Activated CD4-positive, alpha-beta memory T cell treated with anti-CD3 and anti-CD28 coated beads, Interleukin-2, amount 10 ng/mL, durations not matched to agents 7 days and 5 days (primary cell): ENCODE measurements at regions of chr5 and their contacts with region 1.

Region 1: GRCh38 chr5:77015938-77016569 is 14.2 kb upstream of the AGGF1 start:
- DNase-seq: no peak
- H3K4me3 Mint-ChIP-seq: no peak overlapping the region
- H3K27ac Mint-ChIP-seq: no peak overlapping the region
- H3K4me1 Mint-ChIP-seq: peaks cover 14% of the 10 kb centered on the region
- H3K27me3 Mint-ChIP-seq: peaks cover 18% of the 10 kb centered on the region

Region 2: DNA sequence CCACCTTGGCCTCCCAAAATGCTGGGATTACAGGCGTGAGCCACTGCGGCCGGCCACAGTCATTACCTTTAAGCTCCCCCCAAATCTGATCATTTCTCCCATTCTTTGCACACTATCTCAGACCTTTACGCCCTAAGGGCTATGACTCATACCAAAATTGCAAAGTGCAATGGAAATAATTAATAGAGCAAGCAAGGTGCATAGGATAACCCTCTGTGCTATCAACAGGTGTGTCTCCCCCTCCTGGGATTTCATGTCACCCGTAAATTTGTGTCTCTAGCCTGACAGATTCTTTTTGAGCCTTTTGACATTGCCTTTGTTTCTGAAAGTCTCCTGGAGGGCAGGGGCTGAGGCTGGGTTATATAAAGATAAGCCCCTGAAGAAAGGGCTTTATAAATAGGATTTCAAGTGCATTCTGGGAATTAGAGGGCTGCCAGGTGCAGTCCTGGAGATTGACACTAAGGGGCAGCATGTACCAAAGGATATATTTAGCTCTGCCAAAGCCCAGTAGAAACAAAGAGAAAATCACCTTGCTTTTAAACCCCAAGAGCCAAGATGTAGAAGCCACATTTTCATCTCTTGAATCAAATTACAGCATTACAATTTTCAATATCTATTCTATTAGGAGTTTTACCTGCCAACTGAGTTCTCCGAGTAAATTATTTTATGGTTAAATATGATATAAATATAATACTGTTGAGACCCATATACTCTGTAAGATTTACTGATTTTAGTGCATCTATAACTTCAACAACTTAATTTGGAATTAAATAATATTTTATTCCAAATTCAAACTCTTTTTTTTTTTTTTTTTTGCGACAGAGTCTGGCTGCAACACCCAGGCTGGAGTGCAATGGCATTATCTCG is 148.0 kb before region 1 on chr5:
- CTCF ChIA-PET with region 1: interaction called, 34 read pairs
- POLR2A ChIA-PET with region 1: interaction called, 4 read pairs
- DNase-seq: peak; percentile 73
- H3K4me3 Mint-ChIP-seq: no peak overlapping the region
- H3K27ac Mint-ChIP-seq: no peak overlapping the region
- H3K4me1 Mint-ChIP-seq: no peaks in the 10 kb centered on the region
- H3K27me3 Mint-ChIP-seq: no peaks in the 10 kb centered on the region